HCT116 (cell line): ENCODE measurements at regions of chr20 and their contacts with region 1.

Region 1: GRCh38 chr20:59222253-59223181 is 58.9 kb downstream of the ZNF831 start:
- DNase-seq: peak; percentile 33
- ATAC-seq: peak; percentile 97
- H3K4me3 ChIP-seq: peak overlapping the region; percentile 23 to 41
- H3K27ac ChIP-seq: no peak overlapping the region
- H3K4me1 ChIP-seq: peaks cover 0 to 10% of the 10 kb centered on the region in 2 experiments; a peak in 1 of 4 replicates
- H3K27me3 ChIP-seq: peaks cover 34% of the 10 kb centered on the region
- CTCF ChIP-seq: peak; percentile 78 to 97 (median 90)
- POLR2A ChIP-seq: no peak
- RAD21 ChIP-seq: peak; percentile 81

Region 2: GRCh38 chr20:59207742-59208357 is 14.7 kb before region 1 on chr20:
- CTCF ChIA-PET with region 1: interaction called, 10 read pairs
- POLR2A ChIA-PET with region 1: no interaction called
- RAD21 ChIA-PET with region 1: no interaction called
- intact Hi-C with region 1: no loop called
- DNase-seq: peak; percentile 16
- ATAC-seq: peak; percentile 90
- H3K4me3 ChIP-seq: no peak overlapping the region
- H3K27ac ChIP-seq: no peak overlapping the region
- H3K4me1 ChIP-seq: no peaks in the 10 kb centered on the region
- H3K27me3 ChIP-seq: peaks cover 22% of the 10 kb centered on the region
- CTCF ChIP-seq: peak; percentile 53 to 72 (median 67); a peak in 5 of 6 replicates
- POLR2A ChIP-seq: no peak
- RAD21 ChIP-seq: peak; percentile 71

Region 3: GRCh38 chr20:59247731-59248684 is 25.5 kb after region 1 on chr20:
- CTCF ChIA-PET with region 1: no interaction called
- POLR2A ChIA-PET with region 1: no interaction called
- RAD21 ChIA-PET with region 1: no interaction called
- intact Hi-C with region 1: no loop called
- DNase-seq: no peak
- ATAC-seq: no peak
- H3K4me3 ChIP-seq: no peak overlapping the region
- H3K27ac ChIP-seq: no peak overlapping the region
- H3K4me1 ChIP-seq: no peaks in the 10 kb centered on the region
- H3K27me3 ChIP-seq: peaks cover 99% of the 10 kb centered on the region
- CTCF ChIP-seq: no peak
- POLR2A ChIP-seq: no peak
- RAD21 ChIP-seq: no peak

Region 4: GRCh38 chr20:59571551-59572314 is 349.2 kb after region 1 on chr20:
- CTCF ChIA-PET with region 1: no interaction called
- POLR2A ChIA-PET with region 1: no interaction called
- RAD21 ChIA-PET with region 1: no interaction called
- intact Hi-C with region 1: no loop called
- DNase-seq: peak; percentile 12
- ATAC-seq: peak; percentile 88
- H3K4me3 ChIP-seq: no peak overlapping the region
- H3K27ac ChIP-seq: no peak overlapping the region
- H3K4me1 ChIP-seq: 0 out of 4 replicates have a peak, but pooled peaks cover 0 to 2% of the 10 kb centered on the region in 2 experiments
- H3K27me3 ChIP-seq: 0 out of 2 replicates have a peak, but pooled peaks cover 6% of the 10 kb centered on the region
- CTCF ChIP-seq: peak; percentile 43 to 95 (median 94); a peak in 4 of 6 replicates
- POLR2A ChIP-seq: no peak
- RAD21 ChIP-seq: peak; percentile 48

Region 5: GRCh38 chr20:59835448-59836395 is 613.2 kb after region 1 on chr20:
- CTCF ChIA-PET with region 1: no interaction called
- POLR2A ChIA-PET with region 1: no interaction called
- RAD21 ChIA-PET with region 1: no interaction called
- intact Hi-C with region 1: no loop called
- DNase-seq: no peak
- ATAC-seq: no peak
- H3K4me3 ChIP-seq: no peak overlapping the region
- H3K27ac ChIP-seq: no peak overlapping the region
- H3K4me1 ChIP-seq: no peaks in the 10 kb centered on the region; a peak in 1 of 4 replicates
- H3K27me3 ChIP-seq: peaks cover 57% of the 10 kb centered on the region
- CTCF ChIP-seq: no peak
- POLR2A ChIP-seq: no peak
- RAD21 ChIP-seq: no peak